ENCODE measurements at regions of chr9 and their contacts with region 1.

Region 1: GRCh38 chr9:15606643-15607472 is 54.0 kb downstream of the CCDC171 start:
- DNase-seq: peak in 1 of 2 experiments; percentile 43
- H3K4me3 ChIP-seq: no peak overlapping the region
- H3K4me3 Mint-ChIP-seq: no peak overlapping the region
- H3K27ac Mint-ChIP-seq: no peak overlapping the region
- H3K4me1 ChIP-seq: no peaks in the 10 kb centered on the region
- H3K4me1 Mint-ChIP-seq: no peaks in the 10 kb centered on the region
- H3K27me3 ChIP-seq: no peaks in the 10 kb centered on the region
- H3K27me3 Mint-ChIP-seq: no peaks in the 10 kb centered on the region
- CTCF ChIP-seq: peak; percentile 12 to 26

Region 2: DNA sequence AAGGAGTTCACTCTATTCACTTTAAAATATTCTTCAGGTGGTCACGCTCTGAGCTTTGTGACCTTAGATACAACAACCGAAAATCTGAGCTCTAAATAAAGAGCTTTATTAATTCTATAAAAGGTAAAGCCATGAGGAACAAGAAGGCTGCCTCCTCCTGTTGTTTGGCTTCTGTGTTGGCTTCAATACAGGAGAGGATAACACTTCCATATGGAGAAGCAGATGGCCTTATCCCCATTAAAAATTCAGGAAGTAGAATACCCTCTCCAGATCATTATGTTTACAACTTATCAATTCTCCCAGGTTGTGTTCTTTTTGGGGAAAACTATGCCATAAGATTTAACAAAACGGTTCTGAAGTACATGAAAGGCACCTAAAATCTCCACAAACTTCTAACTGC is 428.2 kb before region 1 on chr9:
- CTCF ChIA-PET with region 1: no interaction called
- POLR2A ChIA-PET with region 1: no interaction called
- intact Hi-C with region 1: no loop called
- DNase-seq: no peak
- H3K4me3 ChIP-seq: no peak overlapping the region
- H3K4me3 Mint-ChIP-seq: no peak overlapping the region
- H3K27ac Mint-ChIP-seq: no peak overlapping the region
- H3K4me1 ChIP-seq: no peaks in the 10 kb centered on the region
- H3K4me1 Mint-ChIP-seq: no peaks in the 10 kb centered on the region
- H3K27me3 ChIP-seq: no peaks in the 10 kb centered on the region
- H3K27me3 Mint-ChIP-seq: no peaks in the 10 kb centered on the region
- CTCF ChIP-seq: no peak

Region 3: DNA sequence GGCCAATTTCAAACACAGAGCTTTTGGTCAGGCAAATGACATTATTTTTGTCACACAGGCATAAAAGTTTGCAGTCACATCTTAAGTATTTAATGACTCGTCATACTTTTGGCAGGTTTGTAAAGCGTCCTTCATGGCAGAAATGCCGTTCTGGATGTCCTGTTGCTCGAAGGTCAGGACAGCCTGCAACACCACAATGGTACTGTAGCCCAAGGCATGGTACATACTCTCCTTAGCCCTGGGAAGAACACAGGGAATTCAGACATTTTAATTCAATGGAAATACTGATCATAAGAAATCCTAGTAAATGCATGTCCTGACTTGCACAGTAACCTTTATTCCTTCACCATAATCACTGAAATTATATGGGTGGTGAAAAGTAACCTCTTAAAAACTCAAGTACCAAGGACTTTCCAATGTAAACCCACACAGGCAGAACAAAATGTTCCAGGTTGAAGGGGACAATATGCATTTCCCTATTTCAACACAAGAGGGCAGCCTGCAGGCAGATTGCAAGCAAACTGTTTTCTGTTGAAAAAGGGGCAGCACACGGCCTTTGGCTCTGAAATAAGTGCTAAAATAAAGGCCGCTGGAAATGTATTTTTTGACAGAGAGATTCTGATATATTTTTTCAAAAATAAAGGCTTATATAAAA is 395.6 kb before region 1 on chr9:
- CTCF ChIA-PET with region 1: no interaction called
- POLR2A ChIA-PET with region 1: no interaction called
- intact Hi-C with region 1: loop called (anchors 1 kb)
- DNase-seq: peak; percentile 49 to 75
- H3K4me3 ChIP-seq: no peak overlapping the region
- H3K4me3 Mint-ChIP-seq: no peak overlapping the region
- H3K27ac Mint-ChIP-seq: no peak overlapping the region
- H3K4me1 ChIP-seq: 0 out of 2 replicates have a peak, but pooled peaks cover 4% of the 10 kb centered on the region
- H3K4me1 Mint-ChIP-seq: peaks cover 7% of the 10 kb centered on the region
- H3K27me3 ChIP-seq: no peaks in the 10 kb centered on the region
- H3K27me3 Mint-ChIP-seq: no peaks in the 10 kb centered on the region
- CTCF ChIP-seq: peak; percentile 71 to 79

Region 4: GRCh38 chr9:15510789-15511575 is 95.9 kb before region 1 on chr9 and contains the start of gene PSIP1:
- CTCF ChIA-PET with region 1: interaction called, 3 read pairs
- POLR2A ChIA-PET with region 1: no interaction called
- intact Hi-C with region 1: loop called (anchors 5 kb)
- DNase-seq: peak; percentile 64 to 78
- H3K4me3 ChIP-seq: peak within 1 kb of the TSS; percentile 79
- H3K4me3 Mint-ChIP-seq: peak within 1 kb of the TSS; percentile 79
- H3K27ac Mint-ChIP-seq: peak within 1 kb of the TSS; percentile 100
- H3K4me1 ChIP-seq: peaks cover 4% of the 10 kb centered on the region; the same call in 1 of the 2 replicates
- H3K4me1 Mint-ChIP-seq: no peaks in the 10 kb centered on the region
- H3K27me3 ChIP-seq: no peaks in the 10 kb centered on the region
- H3K27me3 Mint-ChIP-seq: peaks cover 3% of the 10 kb centered on the region
- CTCF ChIP-seq: no peak
- total RNA-seq, gene PSIP1: 43.7 and 54.1 TPM in 2 replicates

Region 5: DNA sequence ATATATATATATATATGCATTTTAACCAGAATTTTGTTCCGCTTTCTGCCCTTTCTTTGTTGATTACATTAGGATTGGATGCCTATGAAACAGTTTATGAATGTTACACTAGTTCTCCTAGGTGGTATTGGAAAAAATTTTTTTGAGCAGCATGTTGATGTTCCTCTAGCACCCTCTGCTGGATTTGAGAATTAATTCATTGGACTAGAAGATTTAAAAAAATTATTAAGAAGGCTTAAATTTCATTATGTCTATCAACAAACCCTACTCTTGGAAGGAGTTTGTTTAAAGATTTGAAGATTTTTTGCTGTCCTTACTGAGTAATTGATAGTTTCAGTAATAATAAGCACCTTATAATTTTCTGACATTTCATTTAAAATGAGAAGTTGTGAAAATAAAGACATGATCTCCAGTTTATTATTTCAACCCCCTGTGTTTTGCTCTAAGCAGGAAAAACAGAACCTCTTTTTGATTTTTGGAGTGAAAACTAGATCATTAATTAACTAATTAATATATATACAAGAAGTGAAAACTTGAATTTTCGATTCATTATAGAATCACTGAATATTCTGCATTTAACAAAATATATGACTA is 35.6 kb after region 1 on chr9:
- CTCF ChIA-PET with region 1: no interaction called
- POLR2A ChIA-PET with region 1: no interaction called
- intact Hi-C with region 1: loop called (anchors 1 kb)
- DNase-seq: peak in 1 of 2 experiments; percentile 27
- H3K4me3 ChIP-seq: no peak overlapping the region
- H3K4me3 Mint-ChIP-seq: no peak overlapping the region
- H3K27ac Mint-ChIP-seq: no peak overlapping the region
- H3K4me1 ChIP-seq: no peaks in the 10 kb centered on the region
- H3K4me1 Mint-ChIP-seq: no peaks in the 10 kb centered on the region
- H3K27me3 ChIP-seq: no peaks in the 10 kb centered on the region
- H3K27me3 Mint-ChIP-seq: peaks cover 6% of the 10 kb centered on the region
- CTCF ChIP-seq: peak; percentile 26 to 31

Measured in Caco-2 (cell line).